Activated T-helper 1 cell treated with anti-CD3 and anti-CD28 coated beads, Interleukin-12 subunit alpha, Interleukin-12 subunit beta, Interleukin-2, Interleukin-4 antibody, amounts not matched to agents 30 ng/mL and 10 ng/mL and 1 ng/mL, durations not matched to agents 14 hours and 24 hours and 36 hours (primary cell): ENCODE measurements at regions of chr11 and their contacts with region 1.

Region 1: GRCh38 chr11:34438529-34439507 is at the start of gene CAT:
- DNase-seq: peak; percentile 97
- H3K4me3 Mint-ChIP-seq: peak within 1 kb of the TSS; percentile 93
- H3K27ac Mint-ChIP-seq: peak within 1 kb of the TSS; percentile 92
- H3K4me1 Mint-ChIP-seq: peaks cover 26% of the 10 kb centered on the region
- H3K27me3 Mint-ChIP-seq: no peaks in the 10 kb centered on the region
- total RNA-seq, gene CAT: 19.1 and 19.9 TPM in 2 replicates

Region 2: DNA sequence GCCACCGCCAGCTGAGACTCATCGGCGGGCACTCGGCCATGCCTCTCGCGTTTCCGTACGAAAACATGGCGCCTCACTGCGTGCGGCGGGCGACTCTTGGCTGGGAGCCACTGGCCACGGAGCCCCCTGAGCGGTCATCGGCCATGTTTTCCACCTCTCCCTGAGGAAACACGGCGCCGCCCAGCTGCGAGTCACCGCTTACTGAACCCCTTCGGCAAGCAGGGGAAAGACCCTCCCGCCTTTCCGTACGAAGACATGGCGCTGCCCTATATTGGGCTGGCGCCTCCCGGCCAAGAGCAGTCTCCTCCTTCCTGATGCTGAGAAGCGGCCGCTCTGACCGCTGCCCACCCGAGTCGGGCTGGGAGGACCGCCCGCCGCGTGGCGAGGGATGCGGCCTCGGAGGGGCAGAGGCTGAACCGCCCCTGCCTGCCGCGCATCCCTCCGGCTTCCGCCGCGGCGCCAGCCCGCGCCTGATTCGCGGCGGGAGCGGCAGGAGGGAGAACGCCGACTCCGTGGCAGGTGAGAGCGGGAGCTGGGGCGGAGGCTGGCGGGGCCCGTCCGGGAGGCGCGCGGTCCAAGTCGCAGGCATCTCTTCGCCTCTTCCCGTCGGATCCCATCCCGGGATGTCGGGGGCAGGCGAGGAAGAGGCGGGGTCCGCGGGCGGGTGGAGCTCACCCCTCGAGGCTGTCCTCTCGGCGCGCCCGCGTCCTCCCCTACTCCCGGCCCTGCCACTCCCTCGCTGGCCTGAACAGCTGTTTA is 1399.4 kb before region 1 on chr11 and contains the start of gene TCP11L1:
- intact Hi-C with region 1: loop called (anchors 10 kb)
- DNase-seq: peak; percentile 72
- H3K4me3 Mint-ChIP-seq: peak within 1 kb of the TSS; percentile 93
- H3K27ac Mint-ChIP-seq: peak within 1 kb of the TSS; percentile 90
- H3K4me1 Mint-ChIP-seq: peaks cover 20% of the 10 kb centered on the region
- H3K27me3 Mint-ChIP-seq: peaks cover 13% of the 10 kb centered on the region
- total RNA-seq, gene TCP11L1: 15.0 and 16.1 TPM in 2 replicates

Region 3: GRCh38 chr11:33257897-33258630 is 1180.8 kb before region 1 on chr11:
- intact Hi-C with region 1: loop called (anchors 2 kb)
- DNase-seq: peak; percentile 72
- H3K4me3 Mint-ChIP-seq: peak overlapping the region; percentile 99
- H3K27ac Mint-ChIP-seq: peak overlapping the region; percentile 99
- H3K4me1 Mint-ChIP-seq: peaks cover 46% of the 10 kb centered on the region
- H3K27me3 Mint-ChIP-seq: peaks cover 2% of the 10 kb centered on the region

Region 4: DNA sequence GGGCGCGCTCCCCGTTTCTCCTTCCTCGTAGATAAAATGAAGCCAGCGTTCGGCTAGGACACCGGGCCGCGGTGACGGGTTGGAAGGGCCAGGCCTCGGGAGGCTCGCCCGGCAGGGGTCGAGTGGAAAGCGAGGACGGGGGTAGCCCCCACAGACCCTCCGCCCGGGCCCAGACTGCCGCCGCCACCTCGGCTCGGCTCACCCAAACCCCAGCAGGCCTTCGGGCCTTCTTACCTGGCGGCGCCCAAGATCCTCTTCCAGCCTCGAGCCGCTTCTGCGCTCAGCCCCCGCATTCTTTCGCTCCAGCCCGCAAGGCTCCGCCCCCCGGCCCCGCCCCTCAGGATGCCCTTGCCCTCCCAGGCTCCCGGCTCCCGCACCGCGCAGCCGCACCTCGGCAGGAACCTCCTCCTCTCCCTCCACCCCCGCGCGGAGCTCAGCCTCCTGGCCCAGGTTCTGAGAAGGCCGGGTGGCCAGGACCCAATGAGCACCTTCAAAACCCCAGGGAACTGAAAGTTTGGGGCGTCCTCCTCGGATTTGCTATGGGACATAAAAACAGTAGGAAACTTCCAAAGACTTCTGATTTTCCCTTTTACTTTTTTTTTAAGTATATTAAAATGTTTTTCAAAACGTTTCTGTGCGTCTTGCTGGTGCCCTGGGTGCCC is 702.5 kb before region 1 on chr11 and contains the start of gene CD59:
- intact Hi-C with region 1: loop called (anchors 10 kb)
- DNase-seq: peak; percentile 83
- H3K4me3 Mint-ChIP-seq: peak within 1 kb of the TSS; percentile 87
- H3K27ac Mint-ChIP-seq: peak within 1 kb of the TSS; percentile 89
- H3K4me1 Mint-ChIP-seq: peaks cover 37% of the 10 kb centered on the region
- H3K27me3 Mint-ChIP-seq: peaks cover 3% of the 10 kb centered on the region
- total RNA-seq, gene CD59: 140 and 143 TPM in 2 replicates

Region 5: GRCh38 chr11:33959855-33960400 is 478.9 kb before region 1 on chr11:
- intact Hi-C with region 1: no loop called
- DNase-seq: no peak
- H3K4me3 Mint-ChIP-seq: no peak overlapping the region
- H3K27ac Mint-ChIP-seq: no peak overlapping the region
- H3K4me1 Mint-ChIP-seq: no peaks in the 10 kb centered on the region
- H3K27me3 Mint-ChIP-seq: peaks cover 22% of the 10 kb centered on the region

Region 6: GRCh38 chr11:34051349-34052035 is 387.3 kb before region 1 on chr11 and contains the start of gene CAPRIN1:
- intact Hi-C with region 1: loop called (anchors 1 kb)
- DNase-seq: peak; percentile 80
- H3K4me3 Mint-ChIP-seq: peak within 1 kb of the TSS; percentile 99
- H3K27ac Mint-ChIP-seq: peak within 1 kb of the TSS; percentile 97
- H3K4me1 Mint-ChIP-seq: peaks cover 8% of the 10 kb centered on the region
- H3K27me3 Mint-ChIP-seq: no peaks in the 10 kb centered on the region
- total RNA-seq, gene CAPRIN1: 285 and 289 TPM in 2 replicates

Region 7: DNA sequence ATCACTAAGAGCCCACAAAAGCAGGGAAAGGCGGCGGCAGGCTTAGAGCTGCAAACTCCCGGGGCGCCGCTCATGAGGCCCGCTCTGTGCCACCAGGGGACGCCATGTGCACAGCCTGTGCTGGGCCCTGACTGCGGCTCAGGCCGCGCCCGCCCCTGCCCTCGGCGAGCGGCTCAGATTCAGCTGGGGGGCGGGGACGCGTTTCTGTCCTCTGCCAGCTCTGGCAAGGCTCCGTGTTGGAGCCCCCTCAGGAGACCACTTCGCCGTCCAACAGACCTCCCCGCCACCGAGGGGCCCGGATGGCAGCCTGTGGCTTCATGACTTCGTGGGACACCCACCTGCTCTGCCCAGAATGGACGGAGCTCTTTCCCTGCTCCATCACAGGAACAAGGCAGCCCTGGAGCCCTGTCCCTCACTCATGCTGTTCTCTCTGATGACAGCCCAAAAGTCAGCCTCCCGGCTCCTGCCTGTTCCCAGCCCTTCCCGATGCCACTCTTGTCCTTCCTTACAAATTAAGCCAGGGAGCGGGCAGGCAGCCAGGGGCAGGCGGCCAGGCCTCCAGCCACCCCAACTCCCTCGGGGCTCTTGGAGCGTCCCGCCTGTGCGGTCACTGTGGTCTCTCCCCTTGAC is 264.3 kb before region 1 on chr11:
- intact Hi-C with region 1: loop called (anchors 2 kb)
- DNase-seq: peak; percentile 71
- H3K4me3 Mint-ChIP-seq: peak overlapping the region; percentile 73
- H3K27ac Mint-ChIP-seq: no peak overlapping the region
- H3K4me1 Mint-ChIP-seq: peaks cover 22% of the 10 kb centered on the region
- H3K27me3 Mint-ChIP-seq: peaks cover 2% of the 10 kb centered on the region

Region 8: DNA sequence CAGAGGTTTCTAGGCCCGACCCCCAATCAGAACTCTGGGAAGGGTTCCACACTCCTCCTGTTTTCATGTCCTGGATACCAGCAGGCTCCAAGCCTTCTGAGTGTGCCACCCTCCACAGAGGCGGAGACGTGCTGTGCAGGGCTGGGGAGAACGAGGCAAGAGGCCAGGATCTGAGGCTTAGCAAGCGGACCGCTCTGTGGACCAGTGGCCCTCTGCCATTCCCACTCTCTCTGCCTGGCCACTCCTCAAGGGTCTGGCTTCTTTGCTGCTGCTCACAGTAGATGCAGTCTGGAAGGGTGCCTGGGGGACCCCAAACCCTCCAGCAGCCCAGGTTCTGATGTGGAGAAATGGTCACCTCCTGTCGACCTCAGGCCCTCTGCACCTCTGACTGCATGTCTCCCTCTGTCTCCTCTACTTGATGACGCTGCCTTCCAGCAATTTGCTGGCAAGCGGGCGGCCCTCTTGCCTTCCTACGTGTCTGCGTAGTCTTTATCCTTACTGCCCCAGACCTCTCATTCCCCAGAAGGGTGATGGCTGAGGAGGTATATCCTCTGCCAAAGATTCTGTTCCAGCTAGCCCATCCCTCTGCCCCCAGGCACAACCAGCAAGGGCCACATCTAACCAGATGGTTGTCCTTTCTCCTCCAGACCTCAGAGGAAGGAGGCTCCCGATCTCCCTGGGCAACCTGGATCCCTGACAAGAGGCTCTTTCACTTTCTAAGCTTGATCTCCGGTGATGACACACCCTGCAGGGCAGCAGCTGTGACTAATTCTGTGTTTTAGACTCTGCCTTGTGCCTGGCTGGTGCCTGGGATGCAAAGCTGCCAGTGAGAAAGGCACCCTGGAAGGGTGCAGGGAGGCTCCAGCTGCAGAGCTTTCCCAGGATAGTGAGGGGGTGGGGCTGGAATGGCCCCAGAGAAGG is 246.1 kb before region 1 on chr11:
- intact Hi-C with region 1: no loop called
- DNase-seq: no peak
- H3K4me3 Mint-ChIP-seq: no peak overlapping the region
- H3K27ac Mint-ChIP-seq: no peak overlapping the region
- H3K4me1 Mint-ChIP-seq: peaks cover 33% of the 10 kb centered on the region
- H3K27me3 Mint-ChIP-seq: peaks cover 2% of the 10 kb centered on the region

Region 9: GRCh38 chr11:34468209-34468841 is 29.5 kb after region 1 on chr11:
- intact Hi-C with region 1: loop called (anchors 2 kb)
- DNase-seq: peak; percentile 22
- H3K4me3 Mint-ChIP-seq: no peak overlapping the region
- H3K27ac Mint-ChIP-seq: no peak overlapping the region
- H3K4me1 Mint-ChIP-seq: peaks cover 6% of the 10 kb centered on the region
- H3K27me3 Mint-ChIP-seq: no peaks in the 10 kb centered on the region